Activated CD4-positive, alpha-beta T cell treated with anti-CD3 and anti-CD28 coated beads for 36 hours (primary cell): ENCODE measurements at regions of chr1 and their contacts with region 1.

Region 1: GRCh38 chr1:23577056-23578004 is 18.0 kb upstream of the ID3 start:
- DNase-seq: peak; percentile 73
- ATAC-seq: peak; percentile 98
- H3K4me3 Mint-ChIP-seq: peak overlapping the region; percentile 8
- H3K27ac Mint-ChIP-seq: peak overlapping the region; percentile 79
- H3K4me1 Mint-ChIP-seq: peaks cover 47% of the 10 kb centered on the region
- H3K27me3 Mint-ChIP-seq: no peaks in the 10 kb centered on the region

Region 2: DNA sequence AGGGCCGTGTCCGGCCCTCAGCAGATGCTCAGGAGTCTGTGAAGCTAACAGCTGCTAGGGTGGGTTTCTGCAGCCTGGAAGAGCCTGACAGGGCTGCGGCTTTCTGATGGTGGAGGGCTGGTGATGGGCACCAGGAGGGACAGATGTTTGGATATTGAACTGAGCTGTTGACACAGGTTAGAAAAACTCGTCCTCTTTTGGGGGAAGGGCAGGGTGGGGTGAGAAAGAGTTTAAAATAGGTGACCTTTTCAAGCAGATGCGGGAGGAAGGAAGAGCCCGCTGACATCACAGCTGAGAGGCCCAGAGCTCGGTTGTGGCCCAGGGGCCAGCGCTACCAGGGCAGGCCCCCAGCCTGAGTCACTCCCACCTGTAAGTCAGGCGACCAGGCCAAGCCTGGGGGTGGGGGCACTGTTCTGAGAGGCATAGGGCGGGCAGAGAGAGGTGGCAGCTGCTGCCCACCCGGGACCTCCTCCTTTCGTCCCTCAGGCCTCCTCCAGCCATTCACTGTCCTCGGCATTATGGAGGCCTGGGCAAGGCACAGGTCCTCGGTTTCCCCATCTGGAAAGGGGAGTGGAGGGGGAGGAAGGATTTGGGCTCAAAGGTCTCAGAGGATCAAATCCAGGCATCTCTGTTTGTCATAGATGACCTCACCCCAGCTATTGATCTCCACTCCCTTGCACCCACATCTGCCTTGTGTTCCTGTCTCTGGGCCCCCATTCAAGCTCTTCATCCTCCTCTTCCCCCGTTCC is 14.3 kb after region 1 on chr1:
- CTCF ChIA-PET with region 1: interaction called, 7 read pairs
- POLR2A ChIA-PET with region 1: interaction called, 13 read pairs
- intact Hi-C with region 1: loop called in 1 of 2 experiments (anchors 2 kb)
- DNase-seq: peak; percentile 84
- ATAC-seq: peak; percentile 85
- H3K4me3 Mint-ChIP-seq: peak overlapping the region; percentile 32
- H3K27ac Mint-ChIP-seq: peak overlapping the region; percentile 96
- H3K4me1 Mint-ChIP-seq: peaks cover 65% of the 10 kb centered on the region
- H3K27me3 Mint-ChIP-seq: no peaks in the 10 kb centered on the region

Region 3: DNA sequence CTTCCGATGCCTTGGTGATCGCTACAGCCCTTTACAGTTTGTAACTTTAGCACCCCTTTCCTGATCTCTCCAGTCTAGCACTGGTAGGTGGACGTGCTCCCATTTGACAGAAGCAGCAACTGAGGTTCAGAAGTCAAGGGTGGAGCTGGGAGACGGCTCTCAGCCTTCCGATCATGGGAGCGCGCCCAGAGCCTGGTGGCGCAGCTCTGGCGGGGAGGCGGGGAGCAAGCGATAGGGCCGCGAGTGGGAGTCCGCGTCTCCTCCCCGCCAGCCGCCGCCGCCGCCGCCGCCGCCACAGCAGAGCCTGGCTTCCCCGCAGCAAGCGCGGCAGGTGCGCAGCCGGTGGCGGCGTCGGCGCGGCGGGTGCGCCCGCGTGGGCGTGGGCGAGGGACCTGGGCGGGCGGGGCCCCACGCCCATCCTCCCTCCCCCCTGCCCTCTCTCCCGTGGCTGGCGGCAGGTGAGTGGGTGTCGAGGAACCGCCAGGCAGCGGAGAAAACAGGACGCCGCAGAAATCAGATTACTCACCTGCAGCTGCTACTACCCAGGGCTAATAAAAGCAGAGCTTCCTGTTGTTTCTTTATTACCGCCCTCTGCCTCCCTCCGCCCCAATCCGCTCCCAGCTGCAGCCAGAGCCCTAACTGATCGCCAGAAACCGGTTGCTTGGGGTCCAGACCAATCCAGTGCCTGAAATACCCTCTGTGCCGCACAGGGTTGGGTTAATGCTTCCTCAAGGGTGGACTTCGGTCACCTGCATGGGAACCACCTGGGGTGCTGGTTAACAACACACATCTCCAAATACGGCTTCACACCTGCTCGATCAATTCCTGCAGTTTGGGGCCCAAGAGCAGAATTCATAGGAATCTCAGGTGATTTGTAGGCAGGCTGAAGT is 42.2 kb after region 1 on chr1:
- CTCF ChIA-PET with region 1: interaction called, 5 read pairs
- POLR2A ChIA-PET with region 1: interaction called, 5 read pairs
- intact Hi-C with region 1: loop called in 1 of 2 experiments (anchors 5 kb)
- DNase-seq: peak; percentile 90
- ATAC-seq: peak; percentile 68
- H3K4me3 Mint-ChIP-seq: peak overlapping the region; percentile 60
- H3K27ac Mint-ChIP-seq: peak overlapping the region; percentile 79
- H3K4me1 Mint-ChIP-seq: peaks cover 89% of the 10 kb centered on the region
- H3K27me3 Mint-ChIP-seq: no peaks in the 10 kb centered on the region

Region 4: GRCh38 chr1:23657659-23658275 is 80.4 kb after region 1 on chr1:
- CTCF ChIA-PET with region 1: no interaction called
- POLR2A ChIA-PET with region 1: interaction called, 10 read pairs
- intact Hi-C with region 1: no loop called
- DNase-seq: peak; percentile 72
- ATAC-seq: peak; percentile 91
- H3K4me3 Mint-ChIP-seq: no peak overlapping the region
- H3K27ac Mint-ChIP-seq: no peak overlapping the region
- H3K4me1 Mint-ChIP-seq: no peaks in the 10 kb centered on the region
- H3K27me3 Mint-ChIP-seq: no peaks in the 10 kb centered on the region

Region 5: GRCh38 chr1:23836037-23836436 is 258.7 kb after region 1 on chr1:
- CTCF ChIA-PET with region 1: no interaction called
- POLR2A ChIA-PET with region 1: no interaction called
- intact Hi-C with region 1: no loop called
- DNase-seq: no peak
- ATAC-seq: no peak
- H3K4me3 Mint-ChIP-seq: no peak overlapping the region
- H3K27ac Mint-ChIP-seq: no peak overlapping the region
- H3K4me1 Mint-ChIP-seq: peaks cover 5% of the 10 kb centered on the region
- H3K27me3 Mint-ChIP-seq: peaks cover 5% of the 10 kb centered on the region

Region 6: DNA sequence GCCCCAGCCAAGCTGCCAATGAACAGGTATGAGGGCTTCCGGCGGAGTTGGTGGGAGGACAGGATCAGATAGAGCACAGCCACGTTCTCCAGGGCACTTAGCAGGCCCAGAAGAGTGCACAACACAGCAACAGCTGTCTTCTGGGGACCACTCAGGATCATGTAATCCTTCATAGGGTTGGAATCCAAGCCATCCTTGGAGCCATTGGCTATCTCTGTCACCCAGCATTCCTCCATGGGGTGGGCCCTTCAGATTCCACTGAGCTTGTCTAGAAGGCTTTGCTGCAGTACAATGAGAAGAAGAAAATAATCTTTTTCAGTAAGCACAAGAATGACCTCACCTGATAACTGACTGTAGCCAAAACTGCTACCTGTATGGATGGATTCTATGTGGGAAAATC is 298.1 kb after region 1 on chr1:
- CTCF ChIA-PET with region 1: no interaction called
- POLR2A ChIA-PET with region 1: no interaction called
- intact Hi-C with region 1: no loop called
- DNase-seq: no peak
- ATAC-seq: no peak
- H3K4me3 Mint-ChIP-seq: no peak overlapping the region
- H3K27ac Mint-ChIP-seq: no peak overlapping the region
- H3K4me1 Mint-ChIP-seq: no peaks in the 10 kb centered on the region
- H3K27me3 Mint-ChIP-seq: no peaks in the 10 kb centered on the region